A549 (cell line): ENCODE measurements at regions of chr12 and their contacts with region 1.

Region 1: GRCh38 chr12:113422030-113422885 is at the start of gene SDSL:
- DNase-seq: peak; percentile 80 to 90
- ATAC-seq: peak; percentile 87 to 91
- H3K4me3 ChIP-seq: peak within 1 kb of the TSS; percentile 62
- H3K27ac ChIP-seq: peak within 1 kb of the TSS; percentile 83 to 96
- H3K4me1 ChIP-seq: peaks cover 54% of the 10 kb centered on the region
- CTCF ChIP-seq: no peak
- EP300 ChIP-seq: no peak
- POLR2A ChIP-seq: peak; percentile 67
- RAD21 ChIP-seq: 0 out of 5 replicates have a peak, but pooled peaks of 1 of the 2 experiments have one; percentile 1
- polyA plus RNA-seq, gene SDSL: 21.0 and 22.0 TPM in 2 replicates

Region 2: DNA sequence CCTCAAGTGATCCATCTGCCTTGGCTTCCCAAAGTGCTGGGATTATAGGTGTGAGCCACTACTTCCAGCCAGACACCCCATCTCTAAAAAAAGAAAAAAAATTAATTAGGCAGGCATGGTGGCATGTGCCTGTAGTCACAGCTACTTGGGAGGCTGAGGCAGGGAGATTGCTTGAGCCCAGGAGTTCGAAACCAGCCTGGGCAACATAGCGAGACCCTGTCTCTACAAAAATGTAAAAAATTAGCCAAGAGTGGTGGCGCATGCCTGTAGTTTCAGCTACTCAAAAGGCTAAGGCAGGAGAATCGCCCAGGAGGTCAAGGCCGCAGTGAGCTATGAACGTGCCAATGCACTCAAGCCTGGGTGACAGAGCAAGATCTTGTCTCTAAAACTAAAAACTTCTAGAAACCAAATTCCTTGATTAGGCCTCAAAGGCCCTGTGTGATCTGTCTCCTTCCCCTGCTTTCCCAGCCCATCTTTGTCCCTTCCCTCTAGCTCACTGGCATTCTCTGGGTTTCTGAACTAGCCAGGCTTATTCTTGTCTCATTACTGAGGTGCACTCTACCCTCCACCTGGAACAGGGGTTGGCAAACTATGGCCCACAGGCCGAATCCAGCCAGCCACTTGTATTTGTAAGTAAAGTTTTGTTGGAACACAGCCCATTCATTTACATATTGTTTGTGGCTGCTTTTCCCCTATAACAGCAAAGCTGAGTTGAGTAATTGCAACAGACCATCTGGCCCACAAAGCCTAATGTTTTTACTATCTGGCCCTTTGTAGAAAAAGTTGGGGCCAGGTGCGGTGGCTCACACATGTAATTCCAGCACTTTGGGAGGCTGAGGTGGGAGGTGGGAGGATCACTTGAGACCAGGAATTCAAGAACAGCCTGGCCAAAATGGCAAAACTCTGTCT is 218.2 kb before region 1 on chr12:
- CTCF ChIA-PET with region 1: interaction called, 12 read pairs
- POLR2A ChIA-PET with region 1: no interaction called
- DNase-seq: no peak
- ATAC-seq: no peak
- H3K4me3 ChIP-seq: no peak overlapping the region
- H3K27ac ChIP-seq: 0 out of 6 replicates have a peak overlapping the region, but pooled peaks of 1 of the 2 experiments have one; percentile 4
- H3K4me1 ChIP-seq: no peaks in the 10 kb centered on the region
- CTCF ChIP-seq: no peak
- EP300 ChIP-seq: no peak
- POLR2A ChIP-seq: no peak
- RAD21 ChIP-seq: no peak

Region 3: GRCh38 chr12:113316155-113316554 is 106.1 kb before region 1 on chr12:
- CTCF ChIA-PET with region 1: interaction called, 31 read pairs
- POLR2A ChIA-PET with region 1: interaction called, 3 read pairs
- DNase-seq: no peak
- ATAC-seq: no peak
- H3K4me3 ChIP-seq: no peak overlapping the region
- H3K27ac ChIP-seq: no peak overlapping the region
- H3K4me1 ChIP-seq: peaks cover 8% of the 10 kb centered on the region
- CTCF ChIP-seq: peak; percentile 21; the same call in 2 of the 3 replicates
- EP300 ChIP-seq: no peak
- POLR2A ChIP-seq: no peak
- RAD21 ChIP-seq: peak in 1 of 2 experiments; percentile 11; a peak in 1 of 5 replicates

Region 4: DNA sequence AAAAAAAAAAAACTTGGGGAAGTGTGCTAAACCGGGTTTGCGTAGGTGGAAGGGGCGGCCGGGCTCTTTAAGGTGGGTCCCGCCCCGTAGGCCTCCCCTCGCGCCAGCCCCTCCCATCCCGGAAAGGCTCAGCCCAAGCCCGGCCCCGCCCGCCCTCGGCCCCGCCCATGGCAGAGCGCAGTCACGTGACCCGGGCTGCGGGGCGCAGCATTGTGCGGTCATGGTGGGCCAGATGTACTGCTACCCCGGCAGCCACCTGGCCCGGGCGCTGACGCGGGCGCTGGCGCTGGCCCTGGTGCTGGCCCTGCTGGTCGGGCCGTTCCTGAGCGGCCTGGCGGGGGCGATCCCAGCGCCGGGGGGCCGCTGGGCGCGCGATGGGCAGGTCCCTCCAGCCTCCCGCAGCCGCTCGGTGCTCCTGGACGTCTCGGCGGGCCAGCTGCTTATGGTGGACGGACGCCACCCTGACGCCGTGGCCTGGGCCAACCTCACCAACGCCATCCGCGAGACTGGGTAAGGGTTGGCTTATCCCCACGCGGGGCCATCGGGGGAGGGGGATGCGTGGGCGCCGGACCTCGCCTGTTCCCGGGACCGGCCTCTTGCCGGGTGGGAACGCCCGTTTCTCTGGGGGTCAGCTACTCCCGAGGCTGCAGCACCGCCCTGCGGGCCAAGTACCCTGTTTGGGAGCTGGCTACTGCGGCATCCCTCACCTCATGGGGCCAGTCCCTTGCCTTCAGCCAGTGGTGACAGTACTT is 63.7 kb before region 1 on chr12 and contains the start of gene PLBD2:
- CTCF ChIA-PET with region 1: interaction called, 11 read pairs
- POLR2A ChIA-PET with region 1: no interaction called
- DNase-seq: peak; percentile 93
- ATAC-seq: peak; percentile 90 to 91
- H3K4me3 ChIP-seq: peak within 1 kb of the TSS; percentile 69
- H3K27ac ChIP-seq: peak within 1 kb of the TSS; percentile 79 to 93
- H3K4me1 ChIP-seq: peaks cover 8% of the 10 kb centered on the region; the same call in 1 of the 3 replicates
- CTCF ChIP-seq: no peak
- EP300 ChIP-seq: no peak
- POLR2A ChIP-seq: peak; percentile 86
- RAD21 ChIP-seq: no peak
- polyA plus RNA-seq, gene PLBD2: 13.2 and 22.3 TPM in 2 replicates

Region 5: DNA sequence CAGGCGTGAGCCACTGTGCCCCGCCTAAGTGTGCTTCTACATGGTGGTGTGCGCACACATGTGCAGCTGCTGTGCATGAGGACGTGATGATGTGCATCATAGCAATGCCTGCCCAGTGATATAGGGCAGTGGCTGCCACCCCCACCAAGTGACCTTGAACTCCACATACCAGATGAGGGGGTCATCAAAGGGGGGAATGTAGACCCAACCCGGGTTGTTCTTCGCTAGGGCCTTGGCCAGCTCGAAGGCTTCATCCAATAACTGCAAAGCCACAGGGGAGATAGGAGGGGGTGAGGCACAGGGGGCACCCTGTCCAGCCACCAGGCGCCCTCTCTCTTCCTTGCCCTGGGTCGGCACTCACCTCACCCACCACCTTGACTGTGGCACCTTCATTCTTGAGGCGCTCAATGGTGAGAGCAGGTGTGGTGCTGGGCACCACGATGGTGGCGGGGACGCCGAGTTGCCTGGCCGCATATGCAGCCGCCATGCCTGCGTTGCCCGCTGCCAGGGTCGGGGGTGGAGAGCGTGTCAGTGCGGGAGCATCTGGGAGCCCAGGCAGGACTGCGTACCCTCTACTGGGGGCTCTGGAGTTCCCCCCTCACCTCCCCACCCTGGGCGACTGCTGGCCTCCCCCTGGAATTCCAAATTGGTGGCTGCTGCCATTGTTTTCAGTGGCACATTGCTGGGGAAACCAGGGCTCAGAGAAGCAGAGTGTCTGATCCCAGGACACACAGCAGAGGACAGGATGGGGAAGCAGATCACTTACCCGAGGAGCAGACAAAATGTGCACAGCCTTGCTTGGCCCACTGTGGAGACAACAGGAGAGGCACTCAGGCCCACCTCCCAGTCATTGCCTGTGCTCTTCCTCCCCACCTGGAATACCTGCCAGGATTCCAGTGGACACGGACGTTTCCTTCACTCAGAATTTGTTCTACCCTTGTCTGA is 23.6 kb before region 1 on chr12:
- CTCF ChIA-PET with region 1: interaction called, 16 read pairs
- POLR2A ChIA-PET with region 1: no interaction called
- DNase-seq: no peak
- ATAC-seq: peak in 1 of 2 experiments; percentile 20; a peak in 3 of 6 replicates
- H3K4me3 ChIP-seq: no peak overlapping the region
- H3K27ac ChIP-seq: no peak overlapping the region
- H3K4me1 ChIP-seq: no peaks in the 10 kb centered on the region; the same call in 2 of the 3 replicates
- CTCF ChIP-seq: no peak
- EP300 ChIP-seq: no peak
- POLR2A ChIP-seq: no peak
- RAD21 ChIP-seq: no peak

Region 6: GRCh38 chr12:113439606-113440030 is 17.4 kb after region 1 on chr12:
- CTCF ChIA-PET with region 1: interaction called, 25 read pairs
- POLR2A ChIA-PET with region 1: no interaction called
- DNase-seq: peak; percentile 60 to 74
- ATAC-seq: peak; percentile 75 to 91
- H3K4me3 ChIP-seq: no peak overlapping the region
- H3K27ac ChIP-seq: no peak overlapping the region
- H3K4me1 ChIP-seq: no peaks in the 10 kb centered on the region
- CTCF ChIP-seq: peak; percentile 73
- EP300 ChIP-seq: no peak
- POLR2A ChIP-seq: no peak
- RAD21 ChIP-seq: peak; percentile 70 to 88